Prostate gland (tissue), 2 donors: ENCODE measurements at regions of chr13 and their contacts with region 1.

Region 1: DNA sequence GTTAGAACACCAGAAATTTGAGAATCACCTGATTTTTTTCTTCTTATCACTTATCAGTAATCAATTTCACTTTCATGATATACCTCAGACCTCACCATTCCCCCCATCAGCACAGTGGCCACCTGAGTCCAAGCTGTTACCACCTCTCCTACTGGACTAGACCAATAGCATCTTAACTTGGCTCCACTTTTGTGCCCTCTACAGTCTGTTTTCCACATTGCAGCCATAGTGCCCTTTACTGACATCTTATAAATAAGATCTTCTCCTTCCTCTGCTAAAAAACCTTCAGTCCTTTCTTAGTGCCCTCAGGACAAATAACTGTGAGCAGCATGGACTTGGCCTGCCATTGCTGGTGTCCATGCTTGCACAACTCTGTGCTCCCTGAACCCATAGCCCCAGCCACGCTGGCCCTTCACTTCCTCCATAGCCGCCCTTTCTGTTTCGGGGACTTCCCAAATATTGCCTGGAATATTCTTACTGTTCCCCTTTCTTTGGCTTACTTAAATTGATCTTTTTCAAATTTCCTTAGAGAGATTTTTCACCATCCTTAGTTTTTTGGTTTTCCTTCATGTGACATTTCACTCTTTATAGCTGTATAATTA is 380.8 kb downstream of the LMO7 start:
- DNase-seq: no peak
- H3K4me3 ChIP-seq: no peak overlapping the region
- H3K27ac ChIP-seq: no peak overlapping the region
- H3K4me1 ChIP-seq: no peaks in the 10 kb centered on the region
- H3K27me3 ChIP-seq: no peaks in the 10 kb centered on the region
- CTCF ChIP-seq: peak in 2 of 4 experiments; percentile 16
- POLR2A ChIP-seq: no peak

Region 2: GRCh38 chr13:75704579-75705320 is 312.1 kb before region 1 on chr13:
- intact Hi-C with region 1: loop called (anchors 10 kb)
- DNase-seq: peak; percentile 62
- H3K4me3 ChIP-seq: no peak overlapping the region
- H3K27ac ChIP-seq: peak overlapping the region; percentile 65 to 70
- H3K4me1 ChIP-seq: no peaks in the 10 kb centered on the region
- H3K27me3 ChIP-seq: no peaks in the 10 kb centered on the region
- CTCF ChIP-seq: peak in 1 of 4 experiments; percentile 38
- POLR2A ChIP-seq: no peak

Region 3: GRCh38 chr13:75876360-75877050 is 140.4 kb before region 1 on chr13:
- intact Hi-C with region 1: loop called (anchors 5 kb)
- DNase-seq: peak; percentile 42
- H3K4me3 ChIP-seq: no peak overlapping the region
- H3K27ac ChIP-seq: no peak overlapping the region
- H3K4me1 ChIP-seq: no peaks in the 10 kb centered on the region
- H3K27me3 ChIP-seq: no peaks in the 10 kb centered on the region
- CTCF ChIP-seq: peak; percentile 73 to 82 (median 79)
- POLR2A ChIP-seq: no peak